ENCODE measurements at regions of chr3 and their contacts with region 1.

Region 1: GRCh38 chr3:51371943-51372557 is 13.0 kb upstream of the MANF start:
- DNase-seq: peak in 1 of 2 donors; percentile 64
- H3K4me3 ChIP-seq: no peak overlapping the region
- H3K27ac ChIP-seq: no peak overlapping the region
- H3K4me1 ChIP-seq: no peaks in the 10 kb centered on the region
- H3K27me3 ChIP-seq: no peaks in the 10 kb centered on the region
- CTCF ChIP-seq: peak; percentile 74 to 77

Region 2: GRCh38 chr3:50674349-50675178 is 697.5 kb before region 1 on chr3 and contains the start of gene DOCK3:
- intact Hi-C with region 1: loop called (anchors 10 kb)
- DNase-seq: peak; percentile 42 to 74
- H3K4me3 ChIP-seq: peak within 1 kb of the TSS; percentile 53 to 62
- H3K27ac ChIP-seq: no peak within 1 kb of the TSS
- H3K4me1 ChIP-seq: peaks cover 0 to 14% (median 9%) of the 10 kb centered on the region in 4 donors
- H3K27me3 ChIP-seq: peaks cover 0 to 31% of the 10 kb centered on the region in 2 donors
- CTCF ChIP-seq: no peak

Region 3: DNA sequence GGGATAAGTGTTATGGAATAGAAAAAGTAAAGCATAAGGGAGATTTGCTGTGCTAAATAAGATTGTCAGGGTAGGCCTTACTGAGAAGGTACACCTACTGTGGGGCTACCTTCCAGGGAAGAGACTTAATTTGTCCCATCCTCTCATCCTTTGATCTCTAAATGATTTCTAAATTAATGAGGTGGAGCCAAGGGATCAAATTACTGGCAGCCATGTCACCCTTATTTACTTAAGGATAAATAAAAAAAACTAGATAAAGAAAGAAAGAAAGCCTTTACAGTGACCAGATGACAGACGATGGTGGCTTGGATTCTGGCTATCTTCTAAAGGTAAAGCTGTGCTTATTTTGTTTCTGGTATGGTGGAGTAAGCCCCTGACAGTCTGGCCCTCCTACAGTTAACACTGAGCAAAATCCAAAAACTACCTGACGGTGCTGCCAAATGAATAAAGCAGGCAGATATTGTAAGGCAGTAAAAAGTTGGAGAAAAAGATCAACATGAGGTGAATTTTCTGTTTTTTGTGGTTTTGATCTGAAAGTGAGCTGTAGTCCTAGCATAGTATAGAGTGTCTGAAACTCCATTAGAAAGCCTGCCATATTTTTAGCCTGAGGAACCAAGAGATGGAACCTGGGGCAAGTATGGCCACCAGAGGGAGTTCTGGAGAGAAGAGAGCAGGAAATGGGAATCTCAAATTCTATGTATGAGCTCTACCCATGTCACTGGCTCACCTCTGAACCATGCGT is 272.1 kb before region 1 on chr3:
- intact Hi-C with region 1: loop called (anchors 10 kb)
- DNase-seq: peak in 1 of 2 donors; percentile 31
- H3K4me3 ChIP-seq: no peak overlapping the region
- H3K27ac ChIP-seq: no peak overlapping the region
- H3K4me1 ChIP-seq: no peaks in the 10 kb centered on the region
- H3K27me3 ChIP-seq: no peaks in the 10 kb centered on the region
- CTCF ChIP-seq: peak; percentile 53 to 58

Region 4: GRCh38 chr3:51198477-51198876 is 173.6 kb before region 1 on chr3:
- intact Hi-C with region 1: no loop called
- DNase-seq: no peak
- H3K4me3 ChIP-seq: no peak overlapping the region
- H3K27ac ChIP-seq: no peak overlapping the region
- H3K4me1 ChIP-seq: no peaks in the 10 kb centered on the region
- H3K27me3 ChIP-seq: no peaks in the 10 kb centered on the region
- CTCF ChIP-seq: no peak

Measured in tibial artery (tissue), 4 donors.